ENCODE measurements at regions of chr11 and their contacts with region 1.

Region 1: DNA sequence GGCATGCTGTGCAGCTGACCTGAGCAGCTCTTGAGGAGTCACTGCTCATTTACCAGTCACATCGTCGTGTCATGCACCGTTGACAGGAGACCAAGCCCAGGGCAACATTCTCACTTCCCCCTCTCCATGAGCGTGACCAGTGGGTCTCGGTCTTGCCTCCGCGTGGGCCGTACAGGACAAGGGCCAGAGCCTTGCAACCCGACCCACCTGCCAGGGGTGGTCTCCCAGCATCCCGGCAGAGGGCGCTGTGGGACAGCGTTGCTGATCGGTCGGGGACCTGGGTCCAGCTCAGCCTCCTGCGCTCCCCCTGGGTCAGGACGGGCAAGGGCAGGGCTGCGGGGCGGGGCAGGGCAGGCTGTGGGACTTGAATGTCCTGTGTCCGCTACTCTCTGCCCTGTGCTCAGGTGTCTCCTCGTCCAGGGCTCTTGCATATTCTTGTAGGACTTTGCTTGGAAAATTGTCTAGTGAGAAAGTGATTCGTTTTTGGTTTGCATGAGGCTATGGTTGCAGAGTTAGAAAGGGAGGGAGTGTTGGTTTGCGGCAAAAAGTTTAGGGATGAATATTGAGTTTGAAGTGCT is 16.2 kb downstream of the EIF4G2 start:
- DNase-seq: peak; percentile 73 to 86 (median 79)
- H3K4me3 ChIP-seq: peak overlapping the region; percentile 9
- H3K4me3 Mint-ChIP-seq: peak overlapping the region in 2 of 7 donors; percentile 0 to 3
- H3K27ac ChIP-seq: no peak overlapping the region
- H3K27ac Mint-ChIP-seq: peak overlapping the region in 1 of 8 donors; percentile 76
- H3K4me1 ChIP-seq: peaks cover 21% of the 10 kb centered on the region
- H3K4me1 Mint-ChIP-seq: peaks cover 22 to 43% (median 38%) of the 10 kb centered on the region in 3 donors
- H3K27me3 ChIP-seq: no peaks in the 10 kb centered on the region
- H3K27me3 Mint-ChIP-seq: peaks cover 4 to 6% of the 10 kb centered on the region in 2 donors

Region 2: DNA sequence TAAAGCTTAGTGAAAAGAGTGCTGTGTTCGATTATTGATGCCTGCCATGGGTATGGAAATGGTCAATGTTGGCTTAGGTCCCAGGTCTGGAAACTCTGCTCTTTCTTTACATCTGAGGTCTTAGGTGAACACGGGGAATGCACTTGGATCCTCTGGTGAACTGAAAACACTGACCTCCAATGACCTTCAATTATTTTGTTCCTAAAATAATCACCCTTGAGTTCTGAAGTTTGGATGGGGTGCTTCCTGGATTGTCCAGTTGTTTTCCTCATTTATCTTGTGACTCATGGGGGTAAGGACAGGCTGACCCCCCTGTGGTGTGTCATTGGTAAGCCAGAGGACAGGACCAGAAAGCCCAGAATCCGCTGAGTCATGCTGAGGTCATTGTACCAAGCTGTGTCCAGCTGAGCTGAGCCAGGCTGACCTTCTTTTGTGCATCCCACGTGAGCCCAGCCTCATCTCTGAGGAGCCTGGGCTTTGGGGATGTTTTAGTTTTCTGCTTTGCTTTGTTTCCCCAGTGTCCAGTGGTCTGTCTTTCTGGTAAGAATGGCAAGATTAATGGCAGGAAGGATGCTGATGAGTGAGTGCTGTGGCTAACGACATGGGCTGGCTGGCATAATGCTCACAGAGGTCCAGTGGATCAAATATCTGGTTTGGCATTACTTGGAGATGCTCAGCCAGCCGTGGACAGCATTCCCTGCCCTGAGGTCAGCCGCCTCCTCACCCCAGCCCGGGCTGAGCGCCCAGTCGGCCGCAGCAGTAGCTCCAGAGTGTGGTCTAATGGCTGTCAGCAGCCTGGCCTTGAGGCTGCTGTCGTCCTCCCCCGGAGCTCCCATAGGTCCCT is 301.9 kb before region 1 on chr11:
- CTCF ChIA-PET with region 1: no interaction called
- POLR2A ChIA-PET with region 1: no interaction called
- DNase-seq: no peak
- H3K4me3 ChIP-seq: no peak overlapping the region
- H3K4me3 Mint-ChIP-seq: no peak overlapping the region
- H3K27ac ChIP-seq: no peak overlapping the region
- H3K27ac Mint-ChIP-seq: peak overlapping the region in 5 of 8 donors; percentile 32 to 89 (median 72)
- H3K4me1 ChIP-seq: no peaks in the 10 kb centered on the region
- H3K4me1 Mint-ChIP-seq: peaks cover 10 to 18% (median 12%) of the 10 kb centered on the region in 3 donors
- H3K27me3 ChIP-seq: no peaks in the 10 kb centered on the region
- H3K27me3 Mint-ChIP-seq: no peaks in the 10 kb centered on the region

Region 3: GRCh38 chr11:10550503-10551289 is 241.8 kb before region 1 on chr11:
- CTCF ChIA-PET with region 1: no interaction called
- POLR2A ChIA-PET with region 1: no interaction called
- DNase-seq: no peak
- H3K4me3 ChIP-seq: no peak overlapping the region
- H3K4me3 Mint-ChIP-seq: no peak overlapping the region
- H3K27ac ChIP-seq: no peak overlapping the region
- H3K27ac Mint-ChIP-seq: no peak overlapping the region
- H3K4me1 ChIP-seq: no peaks in the 10 kb centered on the region
- H3K4me1 Mint-ChIP-seq: no peaks in the 10 kb centered on the region
- H3K27me3 ChIP-seq: no peaks in the 10 kb centered on the region
- H3K27me3 Mint-ChIP-seq: peaks cover 12 to 56% of the 10 kb centered on the region in 2 donors

Region 4: DNA sequence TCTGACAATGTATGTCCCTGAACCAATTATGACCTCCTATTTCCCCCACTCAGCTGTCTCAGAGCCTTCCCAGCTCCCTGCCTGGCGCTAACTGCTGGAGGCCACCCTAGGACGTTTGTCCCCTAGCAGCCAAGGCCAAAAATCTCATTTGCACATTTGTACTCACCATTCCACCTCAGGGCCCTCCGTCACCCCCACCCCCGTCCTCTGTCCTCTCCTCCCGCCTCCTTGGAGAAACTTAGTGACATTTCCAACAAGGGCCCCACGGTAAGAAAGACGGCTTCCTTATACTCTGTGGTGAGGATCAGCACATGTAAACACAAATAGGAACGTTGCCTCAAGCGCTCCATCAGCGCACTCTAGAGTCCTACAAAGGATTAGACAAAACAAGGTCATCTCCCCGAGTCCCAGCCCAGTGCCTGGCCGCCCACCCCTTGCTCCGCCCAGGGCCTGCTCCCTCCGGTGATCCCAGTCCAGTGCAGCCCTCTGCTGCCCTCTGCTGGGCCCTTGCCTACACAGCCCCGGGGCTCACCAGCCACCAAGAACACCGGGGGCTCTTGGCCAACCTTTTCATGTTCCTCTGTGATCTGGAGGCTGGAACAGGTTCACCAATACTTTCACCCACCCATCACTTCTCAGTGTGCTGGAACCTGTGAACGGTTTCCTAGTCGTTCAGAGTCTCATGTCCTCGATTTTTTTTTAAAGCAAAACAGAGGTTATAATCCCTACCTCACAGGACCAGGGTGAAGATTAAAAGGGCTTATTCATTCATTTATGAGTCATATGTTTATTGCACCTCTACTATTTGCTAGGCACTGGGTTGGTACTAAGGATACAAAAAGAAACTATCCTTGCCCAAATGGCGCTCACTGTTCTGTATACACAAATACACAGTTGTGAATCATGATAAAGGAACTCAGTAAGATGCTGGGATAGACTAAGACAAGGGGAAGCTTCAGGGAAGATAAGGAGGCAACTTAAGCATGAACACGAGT is 56.7 kb before region 1 on chr11:
- CTCF ChIA-PET with region 1: no interaction called
- POLR2A ChIA-PET with region 1: no interaction called
- DNase-seq: peak; percentile 77 to 89 (median 84)
- H3K4me3 ChIP-seq: no peak overlapping the region
- H3K4me3 Mint-ChIP-seq: peak overlapping the region in 5 of 7 donors; percentile 49 to 84 (median 69)
- H3K27ac ChIP-seq: peak overlapping the region; percentile 54
- H3K27ac Mint-ChIP-seq: peak overlapping the region; percentile 2 to 61 (median 33)
- H3K4me1 ChIP-seq: peaks cover 9% of the 10 kb centered on the region
- H3K4me1 Mint-ChIP-seq: peaks cover 8 to 15% (median 15%) of the 10 kb centered on the region in 3 donors
- H3K27me3 ChIP-seq: no peaks in the 10 kb centered on the region
- H3K27me3 Mint-ChIP-seq: peaks cover 7 to 12% of the 10 kb centered on the region in 2 donors

Region 5: DNA sequence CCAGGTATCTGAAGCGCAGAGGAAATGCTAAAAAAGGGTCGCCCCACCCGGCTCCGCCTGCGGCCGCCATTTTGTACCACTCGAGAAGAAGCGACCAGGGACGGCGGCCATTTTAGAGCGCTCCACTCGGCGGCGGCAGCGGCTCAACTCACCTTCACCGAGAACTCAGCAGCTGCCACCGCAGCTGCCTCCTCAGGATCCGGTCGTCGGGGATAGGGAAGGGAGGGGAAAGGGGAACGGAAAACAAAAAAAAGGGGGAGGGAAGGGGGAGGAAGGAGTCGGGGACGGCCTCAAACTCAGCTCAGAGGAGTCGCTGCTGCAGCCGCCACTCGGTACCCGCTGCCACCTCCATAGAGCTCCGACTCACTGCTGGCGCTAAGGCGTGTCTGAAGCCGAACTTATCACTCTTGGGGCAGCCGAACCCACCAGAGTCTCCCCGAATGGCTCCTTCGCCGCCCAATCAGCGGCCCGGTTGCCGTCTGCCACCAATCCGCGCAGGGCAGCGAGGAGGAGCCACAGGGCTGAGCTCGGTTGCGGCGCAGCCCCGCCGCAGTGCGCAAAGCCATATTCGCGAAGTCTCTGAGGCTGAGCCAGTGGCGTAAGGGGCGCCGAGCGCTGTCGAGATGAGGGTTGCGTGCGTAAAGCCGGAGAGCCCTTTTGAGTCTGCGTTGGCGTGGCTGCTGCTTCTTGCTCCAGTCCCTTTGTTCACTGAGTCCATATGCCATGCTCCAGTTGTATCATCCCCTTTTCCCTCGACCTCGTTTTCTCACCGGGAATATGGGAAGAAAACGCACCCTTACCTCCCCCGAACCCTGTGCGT is 16.3 kb after region 1 on chr11 and contains the start of gene EIF4G2:
- CTCF ChIA-PET with region 1: interaction called, 42 read pairs
- POLR2A ChIA-PET with region 1: interaction called, 49 read pairs
- DNase-seq: peak; percentile 96 to 99 (median 98)
- H3K4me3 ChIP-seq: peak within 1 kb of the TSS; percentile 90
- H3K4me3 Mint-ChIP-seq: peak within 1 kb of the TSS; percentile 95 to 100 (median 98)
- H3K27ac ChIP-seq: peak within 1 kb of the TSS; percentile 93
- H3K27ac Mint-ChIP-seq: peak within 1 kb of the TSS; percentile 93 to 100 (median 98)
- H3K4me1 ChIP-seq: peaks cover 44% of the 10 kb centered on the region
- H3K4me1 Mint-ChIP-seq: peaks cover 42 to 51% (median 50%) of the 10 kb centered on the region in 3 donors
- H3K27me3 ChIP-seq: no peaks in the 10 kb centered on the region
- H3K27me3 Mint-ChIP-seq: peaks cover 0 to 2% of the 10 kb centered on the region in 2 donors
- total RNA-seq, gene EIF4G2: 1,516 to 1,609 TPM

Region 6: GRCh38 chr11:10933455-10934292 is 141.2 kb after region 1 on chr11:
- CTCF ChIA-PET with region 1: interaction called, 19 read pairs
- POLR2A ChIA-PET with region 1: no interaction called
- DNase-seq: peak; percentile 56 to 81 (median 65)
- H3K4me3 ChIP-seq: peak overlapping the region; percentile 59
- H3K4me3 Mint-ChIP-seq: peak overlapping the region; percentile 74 to 92 (median 85)
- H3K27ac ChIP-seq: no peak overlapping the region
- H3K27ac Mint-ChIP-seq: peak overlapping the region in 5 of 8 donors; percentile 1 to 52 (median 24)
- H3K4me1 ChIP-seq: peaks cover 5% of the 10 kb centered on the region
- H3K4me1 Mint-ChIP-seq: peaks cover 15 to 22% (median 21%) of the 10 kb centered on the region in 3 donors
- H3K27me3 ChIP-seq: peaks cover 25% of the 10 kb centered on the region
- H3K27me3 Mint-ChIP-seq: peaks cover 18 to 39% of the 10 kb centered on the region in 2 donors

Region 7: GRCh38 chr11:11022125-11022730 is 229.7 kb after region 1 on chr11:
- CTCF ChIA-PET with region 1: interaction called, 56 read pairs
- POLR2A ChIA-PET with region 1: interaction called, 3 read pairs
- DNase-seq: no peak
- H3K4me3 ChIP-seq: no peak overlapping the region
- H3K4me3 Mint-ChIP-seq: no peak overlapping the region
- H3K27ac ChIP-seq: no peak overlapping the region
- H3K27ac Mint-ChIP-seq: no peak overlapping the region
- H3K4me1 ChIP-seq: no peaks in the 10 kb centered on the region
- H3K4me1 Mint-ChIP-seq: no peaks in the 10 kb centered on the region
- H3K27me3 ChIP-seq: no peaks in the 10 kb centered on the region
- H3K27me3 Mint-ChIP-seq: peaks cover 0 to 3% of the 10 kb centered on the region in 2 donors

Measured in CD8-positive, alpha-beta memory T cell (primary cell).